MCF 10A (cell line): ENCODE measurements at regions of chr10 and their contacts with region 1.

Region 1: GRCh38 chr10:106625751-106626150 is 538.8 kb downstream of the SORCS1 start:
- DNase-seq: no peak
- H3K4me3 Mint-ChIP-seq: no peak overlapping the region
- H3K27ac Mint-ChIP-seq: no peak overlapping the region
- H3K4me1 Mint-ChIP-seq: peaks cover 5% of the 10 kb centered on the region
- H3K27me3 Mint-ChIP-seq: no peaks in the 10 kb centered on the region
- CTCF ChIP-seq: no peak

Region 2: DNA sequence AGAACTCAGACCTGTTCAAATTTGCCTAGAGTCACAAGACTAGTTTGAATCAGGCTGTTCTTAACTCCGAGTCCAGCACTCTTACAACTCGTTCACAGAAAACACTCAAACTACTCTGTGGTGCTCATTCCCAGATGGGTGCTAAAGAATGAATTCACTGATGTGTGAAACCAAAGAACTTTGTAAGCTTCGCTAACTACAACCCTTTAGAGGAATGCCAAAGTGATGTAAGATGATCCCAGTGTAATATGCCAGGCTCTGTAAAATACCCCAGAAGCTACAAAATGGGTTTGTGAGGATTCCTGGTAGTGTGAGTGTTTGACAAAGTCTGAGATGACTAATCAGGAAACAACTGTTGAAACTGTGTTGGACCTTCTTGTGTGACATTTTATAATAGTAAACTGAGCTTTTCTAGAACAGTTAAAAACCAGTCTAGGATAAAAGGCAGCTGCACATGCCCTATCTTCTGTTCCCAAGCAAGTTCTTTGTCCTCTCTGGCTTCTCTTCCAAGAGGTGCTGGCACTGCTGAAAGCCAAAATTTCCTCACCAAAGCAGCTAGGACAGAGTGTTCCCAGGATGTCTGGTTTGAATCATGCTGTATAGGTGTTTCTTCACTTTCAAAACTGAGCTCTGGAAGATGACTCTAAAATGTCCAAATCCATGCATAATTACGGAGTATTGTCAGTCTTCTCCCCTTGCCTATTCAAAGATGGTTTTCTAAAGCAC is 11.2 kb after region 1 on chr10:
- CTCF ChIA-PET with region 1: interaction called, 21 read pairs
- POLR2A ChIA-PET with region 1: interaction called, 3 read pairs
- intact Hi-C with region 1: no loop called
- DNase-seq: peak; percentile 35
- H3K4me3 Mint-ChIP-seq: no peak overlapping the region
- H3K27ac Mint-ChIP-seq: peak overlapping the region; percentile 70
- H3K4me1 Mint-ChIP-seq: peaks cover 5% of the 10 kb centered on the region
- H3K27me3 Mint-ChIP-seq: no peaks in the 10 kb centered on the region
- CTCF ChIP-seq: no peak

Region 3: GRCh38 chr10:106705681-106706100 is 79.9 kb after region 1 on chr10:
- CTCF ChIA-PET with region 1: interaction called, 14 read pairs
- POLR2A ChIA-PET with region 1: no interaction called
- intact Hi-C with region 1: no loop called
- DNase-seq: peak; percentile 75
- H3K4me3 Mint-ChIP-seq: no peak overlapping the region
- H3K27ac Mint-ChIP-seq: peak overlapping the region; percentile 52
- H3K4me1 Mint-ChIP-seq: peaks cover 6% of the 10 kb centered on the region
- H3K27me3 Mint-ChIP-seq: no peaks in the 10 kb centered on the region
- CTCF ChIP-seq: peak; percentile 79

Region 4: DNA sequence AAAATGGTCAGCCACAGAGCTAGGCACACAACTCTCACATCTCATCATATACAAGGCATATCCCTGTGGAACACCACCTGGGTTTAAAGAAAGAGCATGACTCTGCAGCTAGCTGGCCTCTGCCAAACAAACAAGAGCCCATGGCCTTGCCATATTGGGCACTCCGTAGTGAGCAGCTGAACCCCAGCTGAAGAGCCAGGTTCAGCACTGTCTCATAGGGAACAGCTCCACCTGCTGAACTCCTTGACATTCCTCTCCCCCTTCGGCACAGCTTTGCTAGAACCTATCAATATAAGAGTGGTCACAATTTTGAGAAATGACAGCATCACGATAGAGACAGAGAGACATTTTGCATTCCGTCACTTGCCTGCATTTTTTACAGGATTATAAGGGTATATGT is 518.7 kb after region 1 on chr10:
- CTCF ChIA-PET with region 1: no interaction called
- POLR2A ChIA-PET with region 1: no interaction called
- intact Hi-C with region 1: loop called (anchors 10 kb)
- DNase-seq: peak; percentile 23
- H3K4me3 Mint-ChIP-seq: no peak overlapping the region
- H3K27ac Mint-ChIP-seq: no peak overlapping the region
- H3K4me1 Mint-ChIP-seq: no peaks in the 10 kb centered on the region
- H3K27me3 Mint-ChIP-seq: no peaks in the 10 kb centered on the region
- CTCF ChIP-seq: no peak

Region 5: DNA sequence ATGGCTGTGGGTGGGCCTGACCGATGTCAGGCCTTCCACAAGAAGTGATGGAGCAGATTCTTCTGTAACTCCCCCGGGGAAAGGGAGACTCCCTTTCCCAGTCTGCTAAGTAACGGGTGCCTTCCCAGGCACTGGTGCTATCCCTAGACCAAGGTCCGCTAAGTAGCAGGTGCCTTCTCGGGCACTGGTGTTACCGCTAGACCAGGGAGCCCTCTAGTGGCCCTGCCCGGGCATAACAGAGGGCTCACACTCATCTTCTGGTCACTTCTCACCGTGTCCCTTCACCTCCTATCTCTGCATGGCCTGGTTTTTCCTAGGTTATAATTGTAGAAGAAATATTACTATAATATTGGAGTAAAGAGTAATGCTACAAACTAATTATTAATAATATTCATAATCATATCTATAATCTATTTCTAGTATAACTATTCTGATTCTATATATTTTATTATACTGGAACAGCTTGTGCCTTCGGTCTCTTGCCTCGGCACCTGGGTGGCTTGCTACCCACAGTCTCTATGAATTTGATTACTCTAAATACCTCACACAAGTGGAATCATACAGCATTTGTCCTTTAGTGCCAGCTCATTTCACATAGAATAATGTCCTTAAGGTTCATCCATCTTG is 1918.9 kb after region 1 on chr10:
- CTCF ChIA-PET with region 1: interaction called, 3 read pairs
- POLR2A ChIA-PET with region 1: no interaction called
- intact Hi-C with region 1: loop called (anchors 10 kb)
- DNase-seq: peak; percentile 64
- H3K4me3 Mint-ChIP-seq: no peak overlapping the region
- H3K27ac Mint-ChIP-seq: no peak overlapping the region
- H3K4me1 Mint-ChIP-seq: no peaks in the 10 kb centered on the region
- H3K27me3 Mint-ChIP-seq: no peaks in the 10 kb centered on the region
- CTCF ChIP-seq: peak; percentile 96